ENCODE measurements at regions of chr13 and their contacts with region 1.

Region 1: DNA sequence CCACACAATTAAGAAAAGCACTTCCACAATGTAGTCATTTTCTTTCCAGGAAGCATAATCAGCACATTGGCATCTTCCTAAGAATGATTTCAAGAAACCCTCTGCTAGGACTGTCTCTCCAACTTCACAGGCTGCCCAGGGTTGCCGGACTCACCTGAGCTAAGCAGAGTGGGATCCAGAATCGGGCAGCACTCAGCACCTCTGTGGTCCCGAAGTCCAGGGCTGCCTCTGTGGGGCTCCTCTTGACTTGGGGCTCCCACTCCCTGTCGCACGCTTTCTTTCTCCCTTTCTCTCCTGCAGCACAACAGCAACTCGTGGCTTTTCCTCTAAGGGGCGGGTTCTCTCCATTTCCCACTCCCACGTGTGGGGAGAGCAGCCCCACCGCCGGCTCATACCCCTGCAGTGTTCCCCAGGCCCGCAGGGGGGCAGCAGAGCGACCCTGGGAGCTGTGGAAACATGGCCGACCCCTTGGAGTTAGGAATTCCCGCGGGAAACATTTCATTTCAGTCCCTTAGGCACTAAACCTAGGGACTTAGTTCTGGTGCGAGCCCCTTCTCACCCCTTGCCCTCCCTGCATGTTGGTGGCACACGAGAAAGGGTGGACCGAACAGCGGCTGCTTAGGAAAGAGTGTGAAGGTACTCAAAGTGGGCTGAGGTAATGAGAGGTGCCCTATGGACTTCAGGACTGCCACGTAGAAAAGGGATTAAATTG is at the start of gene TMEM272:
- DNase-seq: peak; percentile 56 to 60
- H3K4me3 ChIP-seq: no peak within 1 kb of the TSS
- H3K27ac ChIP-seq: no peak within 1 kb of the TSS
- H3K4me1 ChIP-seq: peaks cover 0 to 4% of the 10 kb centered on the region in 2 donors
- H3K27me3 ChIP-seq: no peaks in the 10 kb centered on the region
- CTCF ChIP-seq: peak; percentile 44 to 98 (median 71)
- POLR2A ChIP-seq: no peak
- total RNA-seq, gene TMEM272: not detected

Region 2: GRCh38 chr13:52001120-52001731 is 156.2 kb after region 1 on chr13:
- intact Hi-C with region 1: loop called (anchors 10 kb)
- DNase-seq: no peak
- H3K4me3 ChIP-seq: no peak overlapping the region
- H3K27ac ChIP-seq: no peak overlapping the region
- H3K4me1 ChIP-seq: peaks cover 9 to 15% of the 10 kb centered on the region in 2 donors
- H3K27me3 ChIP-seq: no peaks in the 10 kb centered on the region
- CTCF ChIP-seq: peak; percentile 26 to 74 (median 54)
- POLR2A ChIP-seq: no peak